ENCODE measurements at regions of chr1 and their contacts with region 1.

Region 1: GRCh38 chr1:21294266-21294989 is 4.2 kb upstream of the ECE1 start:
- DNase-seq: peak; percentile 93
- ATAC-seq: peak; percentile 61
- H3K4me3 Mint-ChIP-seq: peak overlapping the region; percentile 86
- H3K27ac Mint-ChIP-seq: peak overlapping the region; percentile 97
- H3K4me1 Mint-ChIP-seq: peaks cover 86% of the 10 kb centered on the region
- H3K27me3 Mint-ChIP-seq: no peaks in the 10 kb centered on the region

Region 2: DNA sequence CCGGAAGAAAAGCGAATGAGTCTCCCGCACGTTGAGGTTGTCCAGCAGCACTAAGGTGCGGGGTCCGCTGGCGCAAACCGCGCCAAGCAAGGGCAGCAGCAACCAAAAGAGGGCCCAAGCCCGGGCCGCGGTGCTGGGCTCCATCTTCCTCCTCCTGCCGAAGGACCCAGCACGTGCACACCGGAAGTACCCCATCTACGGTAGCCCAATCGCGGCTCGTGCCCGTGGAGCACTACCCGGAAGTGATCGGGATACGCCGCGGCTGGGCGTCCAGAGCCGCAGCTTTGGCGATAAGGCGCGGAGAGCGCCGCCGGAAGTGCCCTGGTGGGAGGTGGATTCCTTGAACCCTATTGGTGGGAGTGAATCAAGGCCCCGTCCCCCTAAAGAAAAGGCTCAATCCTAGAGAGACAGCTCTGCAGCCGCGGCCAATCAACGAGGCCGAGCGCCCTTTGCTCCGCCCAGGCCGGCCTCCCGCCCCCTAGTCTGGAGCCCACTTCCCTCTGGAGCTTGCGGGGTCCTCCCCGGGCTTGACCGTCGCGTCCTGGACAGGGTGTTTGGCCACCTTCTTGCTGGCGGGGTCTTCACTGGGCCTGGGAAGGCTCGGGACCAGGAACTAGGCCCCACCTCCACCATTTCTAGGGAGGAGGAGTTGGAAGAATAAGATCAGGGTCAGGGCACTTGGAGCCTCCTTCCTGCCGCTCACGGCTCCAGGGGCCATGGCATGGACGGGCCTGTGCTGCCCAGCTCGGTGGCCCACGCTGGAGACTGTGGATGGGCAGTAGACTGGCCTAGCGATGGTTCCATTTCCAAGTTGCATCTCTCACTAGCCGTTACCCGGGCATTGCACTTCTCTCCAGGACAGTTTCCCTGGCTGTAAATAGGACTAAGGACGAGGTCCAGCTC is 633.0 kb before region 1 on chr1 and contains the start of gene DDOST:
- CTCF ChIA-PET with region 1: no interaction called
- POLR2A ChIA-PET with region 1: no interaction called
- intact Hi-C with region 1: loop called in 1 of 2 experiments (anchors 1 kb)
- DNase-seq: peak; percentile 97
- ATAC-seq: peak; percentile 97
- H3K4me3 Mint-ChIP-seq: peak within 1 kb of the TSS; percentile 91
- H3K27ac Mint-ChIP-seq: peak within 1 kb of the TSS; percentile 100
- H3K4me1 Mint-ChIP-seq: peaks cover 35% of the 10 kb centered on the region
- H3K27me3 Mint-ChIP-seq: no peaks in the 10 kb centered on the region
- total RNA-seq, gene DDOST: 112 to 136 TPM

Region 3: DNA sequence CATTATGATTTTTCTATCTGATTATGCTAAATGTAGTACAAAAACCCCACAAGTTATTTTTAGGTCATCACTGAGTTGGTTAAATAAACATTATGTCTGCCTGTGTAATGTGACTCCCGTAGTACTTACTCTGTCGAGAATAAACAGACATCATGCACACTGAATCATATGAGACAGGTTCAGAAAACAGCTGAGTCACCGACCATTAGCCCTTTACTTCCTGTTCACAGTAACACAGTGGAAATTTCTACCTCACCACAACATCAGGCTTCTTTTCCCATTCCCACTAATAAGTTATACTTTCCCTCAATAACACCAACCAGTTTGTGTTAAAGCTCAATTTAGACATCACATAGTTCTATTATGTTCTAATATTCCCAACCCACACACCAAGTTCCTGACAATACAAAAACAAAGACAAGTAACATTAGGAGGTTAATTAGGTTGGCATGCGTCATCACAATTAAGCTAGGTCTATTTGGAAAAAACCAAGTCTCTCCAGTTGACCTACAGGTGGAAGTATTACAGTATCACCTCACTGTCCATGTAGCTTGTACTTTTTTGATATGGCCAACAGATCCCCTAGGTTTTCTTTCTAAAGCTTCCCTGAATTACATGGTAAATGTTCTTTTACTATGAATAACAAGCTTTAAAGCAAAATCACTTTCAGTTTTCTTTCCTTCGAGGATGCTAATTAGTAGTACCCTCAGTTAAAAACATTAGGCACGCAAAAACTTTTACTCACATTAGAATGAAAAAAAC is 272.0 kb before region 1 on chr1:
- CTCF ChIA-PET with region 1: no interaction called
- POLR2A ChIA-PET with region 1: no interaction called
- intact Hi-C with region 1: loop called in 1 of 2 experiments (anchors 5 kb)
- DNase-seq: peak; percentile 57
- ATAC-seq: peak; percentile 99
- H3K4me3 Mint-ChIP-seq: peak overlapping the region; percentile 15
- H3K27ac Mint-ChIP-seq: peak overlapping the region; percentile 88
- H3K4me1 Mint-ChIP-seq: peaks cover 20% of the 10 kb centered on the region
- H3K27me3 Mint-ChIP-seq: no peaks in the 10 kb centered on the region

Region 4: GRCh38 chr1:21270086-21270689 is 24.2 kb before region 1 on chr1:
- CTCF ChIA-PET with region 1: interaction called, 19 read pairs
- POLR2A ChIA-PET with region 1: interaction called, 10 read pairs
- intact Hi-C with region 1: no loop called
- DNase-seq: peak; percentile 91
- ATAC-seq: peak; percentile 87
- H3K4me3 Mint-ChIP-seq: no peak overlapping the region
- H3K27ac Mint-ChIP-seq: peak overlapping the region; percentile 21
- H3K4me1 Mint-ChIP-seq: peaks cover 28% of the 10 kb centered on the region
- H3K27me3 Mint-ChIP-seq: no peaks in the 10 kb centered on the region

Region 5: DNA sequence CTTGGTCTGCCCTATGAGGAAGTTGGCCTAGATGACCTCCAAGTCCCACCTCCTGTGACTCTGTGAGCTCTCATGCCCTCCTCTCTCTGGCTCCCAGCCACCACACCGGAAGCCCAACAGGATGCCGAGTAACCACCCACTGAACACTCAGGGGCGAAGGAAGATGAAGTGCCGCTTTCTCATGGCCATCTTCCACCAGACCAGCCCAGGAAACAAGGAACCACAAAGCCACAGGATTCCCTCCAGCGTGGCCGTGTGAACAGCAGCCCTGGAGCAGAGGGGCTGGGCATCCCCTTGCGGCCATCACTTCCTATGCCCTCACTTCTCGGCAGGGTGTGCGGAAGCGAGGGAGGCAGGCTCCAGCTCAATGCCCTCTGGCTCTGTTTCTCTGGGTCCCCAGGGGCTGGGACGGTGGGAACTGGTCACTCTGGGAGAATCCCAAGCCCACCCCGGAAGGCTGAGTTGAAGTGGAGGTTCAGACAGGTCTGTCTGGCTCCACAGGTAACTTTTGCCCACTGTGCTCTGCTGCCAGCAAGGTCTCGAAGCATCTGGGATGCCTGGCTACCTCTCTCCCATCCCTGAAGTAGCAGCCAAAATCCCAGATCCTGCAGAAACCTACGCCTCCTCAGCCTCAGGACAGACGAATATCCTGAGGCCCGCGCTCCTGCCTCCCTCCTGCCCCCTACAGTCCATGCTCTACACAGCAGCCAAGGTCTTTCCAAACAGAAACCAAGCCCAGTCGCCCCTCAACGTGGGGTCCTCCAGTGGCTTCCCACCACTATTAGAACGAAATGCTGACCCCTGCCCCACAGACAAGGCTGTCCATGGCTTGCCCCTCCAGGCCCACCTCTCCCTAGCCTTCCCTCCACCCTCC is 40.0 kb after region 1 on chr1:
- CTCF ChIA-PET with region 1: interaction called, 30 read pairs
- POLR2A ChIA-PET with region 1: interaction called, 13 read pairs
- intact Hi-C with region 1: loop called (anchors 1 kb)
- DNase-seq: peak; percentile 87
- ATAC-seq: peak; percentile 84
- H3K4me3 Mint-ChIP-seq: peak overlapping the region; percentile 80
- H3K27ac Mint-ChIP-seq: peak overlapping the region; percentile 97
- H3K4me1 Mint-ChIP-seq: peaks cover 97% of the 10 kb centered on the region
- H3K27me3 Mint-ChIP-seq: no peaks in the 10 kb centered on the region

Region 6: DNA sequence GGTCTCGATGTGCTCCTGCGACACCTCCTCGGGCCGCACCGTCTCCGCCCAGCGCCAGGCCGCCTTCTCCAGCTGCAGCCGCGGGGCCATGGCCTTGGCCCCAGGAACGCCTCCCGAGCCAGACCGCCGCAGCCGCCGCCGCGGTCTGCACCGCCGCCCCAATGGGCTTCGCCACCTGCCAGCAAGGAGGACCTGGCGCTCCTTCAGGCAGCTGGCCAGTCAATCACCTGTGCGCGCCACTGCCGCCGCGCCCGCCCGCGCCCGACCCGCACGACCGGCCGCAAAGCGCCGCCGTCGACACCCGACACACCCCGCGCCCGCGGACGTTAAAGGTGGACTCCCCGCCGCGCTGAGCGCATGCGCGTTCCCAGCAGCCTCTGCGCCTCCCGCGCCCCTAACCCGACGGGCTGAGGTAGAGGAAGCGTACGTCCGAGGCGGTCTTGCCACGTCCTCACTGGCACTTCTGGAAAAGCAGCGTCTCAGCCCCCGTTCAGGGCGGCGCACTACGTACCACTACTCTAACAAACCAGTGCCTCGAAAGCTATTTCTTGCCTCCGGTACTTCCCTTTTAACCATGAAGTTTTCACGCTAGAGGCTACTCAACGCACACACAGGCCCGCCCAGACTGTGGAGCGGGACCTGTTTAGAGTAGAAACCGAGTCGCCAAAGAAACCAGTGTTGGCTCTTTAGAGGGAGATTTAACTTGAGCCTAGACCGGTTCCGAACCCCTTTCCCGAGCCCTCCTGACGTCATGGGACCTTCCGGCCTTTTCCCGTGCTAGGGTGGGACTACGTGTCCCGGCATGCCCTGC is 488.6 kb after region 1 on chr1 and contains the start of gene USP48:
- CTCF ChIA-PET with region 1: no interaction called
- POLR2A ChIA-PET with region 1: no interaction called
- intact Hi-C with region 1: loop called (anchors 1 to 5 kb)
- DNase-seq: peak; percentile 98
- ATAC-seq: peak; percentile 79
- H3K4me3 Mint-ChIP-seq: peak within 1 kb of the TSS; percentile 87
- H3K27ac Mint-ChIP-seq: peak within 1 kb of the TSS; percentile 100
- H3K4me1 Mint-ChIP-seq: peaks cover 21% of the 10 kb centered on the region
- H3K27me3 Mint-ChIP-seq: no peaks in the 10 kb centered on the region
- total RNA-seq, gene USP48: 66.9 to 81.5 TPM

Measured in activated CD4-positive, alpha-beta T cell treated with anti-CD3 and anti-CD28 coated beads for 36 hours (primary cell).